Heart left ventricle (tissue), 16 donors: ENCODE measurements at regions of chr18 and their contacts with region 1.

Region 1: GRCh38 chr18:34122724-34123334 is 101.9 kb downstream of the NOL4 start:
- DNase-seq: peak in 2 of 5 donors; percentile 8 to 13
- ATAC-seq: peak in 1 of 4 donors; percentile 65
- H3K4me3 ChIP-seq: no peak overlapping the region
- H3K27ac ChIP-seq: no peak overlapping the region
- H3K4me1 ChIP-seq: no peaks in the 10 kb centered on the region
- H3K27me3 ChIP-seq: no peaks in the 10 kb centered on the region
- CTCF ChIP-seq: peak; percentile 68 to 92 (median 81)
- POLR2A ChIP-seq: no peak

Region 2: DNA sequence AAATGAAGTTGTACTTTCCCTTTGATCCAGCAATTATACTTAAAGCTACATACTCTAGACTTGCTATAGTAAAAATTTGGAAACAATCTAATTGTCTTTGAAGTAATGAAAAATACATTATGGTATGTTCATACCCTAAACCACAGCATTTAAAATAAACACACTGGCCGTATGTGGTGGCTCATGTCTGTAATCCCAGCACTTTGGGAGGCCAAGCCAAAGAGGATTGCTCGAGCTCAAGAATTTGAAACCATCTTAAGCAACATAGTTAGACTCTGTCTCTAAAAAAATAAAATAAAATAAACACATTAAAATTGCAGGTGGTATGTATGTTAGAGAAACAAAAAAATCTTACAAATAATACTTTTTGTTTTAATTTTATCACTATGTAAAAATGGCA is 1141.9 kb before region 1 on chr18:
- intact Hi-C with region 1: no loop called
- DNase-seq: no peak
- ATAC-seq: no peak
- H3K4me3 ChIP-seq: no peak overlapping the region
- H3K27ac ChIP-seq: no peak overlapping the region
- H3K4me1 ChIP-seq: no peaks in the 10 kb centered on the region
- H3K27me3 ChIP-seq: no peaks in the 10 kb centered on the region
- CTCF ChIP-seq: no peak
- POLR2A ChIP-seq: no peak

Region 3: DNA sequence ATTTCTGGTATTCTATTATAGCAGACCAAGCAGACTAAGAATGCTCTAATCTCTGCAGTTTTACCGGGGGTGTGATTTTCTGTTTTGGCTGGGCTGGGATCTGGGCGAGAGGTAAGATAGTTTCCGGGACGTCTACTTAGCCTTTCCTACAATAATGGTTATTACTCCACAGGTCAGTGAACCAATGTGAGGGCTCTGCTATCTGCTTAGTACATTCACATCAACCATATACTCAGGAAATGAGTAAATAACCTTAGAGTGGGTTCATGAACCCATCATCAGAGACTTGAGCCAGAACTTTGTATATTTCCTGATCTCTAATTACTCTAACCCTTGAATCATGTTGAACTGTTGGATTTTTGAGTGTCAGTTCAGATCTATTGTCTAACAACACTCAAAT is 192.0 kb after region 1 on chr18:
- intact Hi-C with region 1: loop called in 6 of 10 experiments (anchors 5 kb)
- DNase-seq: no peak
- ATAC-seq: no peak
- H3K4me3 ChIP-seq: no peak overlapping the region
- H3K27ac ChIP-seq: no peak overlapping the region
- H3K4me1 ChIP-seq: no peaks in the 10 kb centered on the region
- H3K27me3 ChIP-seq: no peaks in the 10 kb centered on the region
- CTCF ChIP-seq: no peak
- POLR2A ChIP-seq: no peak

Region 4: GRCh38 chr18:34322365-34323289 is 199.8 kb after region 1 on chr18:
- intact Hi-C with region 1: loop called in 9 of 10 experiments (anchors 1 to 5 kb)
- DNase-seq: peak in 2 of 5 donors; percentile 8 to 24
- ATAC-seq: no peak
- H3K4me3 ChIP-seq: no peak overlapping the region
- H3K27ac ChIP-seq: no peak overlapping the region
- H3K4me1 ChIP-seq: no peaks in the 10 kb centered on the region
- H3K27me3 ChIP-seq: no peaks in the 10 kb centered on the region
- CTCF ChIP-seq: peak; percentile 33 to 68 (median 56)
- POLR2A ChIP-seq: no peak